Pancreas (tissue), 10 donors: ENCODE measurements at regions of chr22 and their contacts with region 1.

Region 1: DNA sequence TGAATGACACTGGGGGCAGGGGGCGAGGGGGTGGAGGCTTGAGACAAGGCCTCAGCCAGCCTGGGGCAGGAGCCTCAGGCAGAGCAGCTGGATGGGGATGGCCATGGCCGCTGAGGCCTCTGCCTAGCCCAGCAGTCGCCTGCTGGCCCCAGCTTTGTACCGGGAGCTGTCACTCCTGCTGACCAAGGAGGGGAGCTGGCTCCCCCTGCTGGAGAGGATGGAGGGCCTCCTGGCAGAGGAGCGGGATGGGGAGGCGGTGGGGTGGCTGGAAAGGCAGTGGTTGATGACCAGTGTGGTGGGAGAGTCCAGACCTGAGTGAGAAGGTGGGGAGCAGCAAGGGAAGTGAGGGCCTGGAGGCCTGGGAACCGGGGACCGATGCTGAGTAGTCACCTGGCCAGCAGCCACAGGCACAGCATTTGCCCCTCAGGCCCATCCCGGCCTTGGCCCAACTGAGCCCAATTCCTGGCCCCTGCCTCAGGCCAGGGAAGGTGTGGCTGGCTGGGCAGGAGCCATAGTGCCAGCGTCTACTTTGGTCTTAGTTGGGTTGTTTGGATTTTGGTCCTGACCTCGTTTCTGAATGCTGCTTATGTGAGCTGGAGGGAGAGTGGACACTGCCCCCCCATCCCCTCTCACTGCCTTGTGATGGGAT is 6.0 kb upstream of the SUSD2 start:
- DNase-seq: peak; percentile 58 to 90 (median 80)
- ATAC-seq: peak; percentile 70 to 89 (median 82)
- H3K4me3 ChIP-seq: no peak overlapping the region
- H3K27ac ChIP-seq: no peak overlapping the region
- H3K4me1 ChIP-seq: no peaks in the 10 kb centered on the region
- H3K27me3 ChIP-seq: no peaks in the 10 kb centered on the region
- CTCF ChIP-seq: peak; percentile 50 to 66 (median 62)

Region 2: GRCh38 chr22:24005201-24005600 is 170.1 kb before region 1 on chr22 and contains the start of gene GSTT4:
- intact Hi-C with region 1: loop called in 1 of 3 experiments (anchors 10 kb)
- DNase-seq: peak in 1 of 6 donors; percentile 70
- ATAC-seq: peak in 3 of 4 donors; percentile 17 to 52 (median 26)
- H3K4me3 ChIP-seq: no peak within 1 kb of the TSS
- H3K27ac ChIP-seq: no peak within 1 kb of the TSS
- H3K4me1 ChIP-seq: no peaks in the 10 kb centered on the region
- H3K27me3 ChIP-seq: no peaks in the 10 kb centered on the region
- CTCF ChIP-seq: no peak
- total RNA-seq, gene GSTT4: not detected

Region 3: DNA sequence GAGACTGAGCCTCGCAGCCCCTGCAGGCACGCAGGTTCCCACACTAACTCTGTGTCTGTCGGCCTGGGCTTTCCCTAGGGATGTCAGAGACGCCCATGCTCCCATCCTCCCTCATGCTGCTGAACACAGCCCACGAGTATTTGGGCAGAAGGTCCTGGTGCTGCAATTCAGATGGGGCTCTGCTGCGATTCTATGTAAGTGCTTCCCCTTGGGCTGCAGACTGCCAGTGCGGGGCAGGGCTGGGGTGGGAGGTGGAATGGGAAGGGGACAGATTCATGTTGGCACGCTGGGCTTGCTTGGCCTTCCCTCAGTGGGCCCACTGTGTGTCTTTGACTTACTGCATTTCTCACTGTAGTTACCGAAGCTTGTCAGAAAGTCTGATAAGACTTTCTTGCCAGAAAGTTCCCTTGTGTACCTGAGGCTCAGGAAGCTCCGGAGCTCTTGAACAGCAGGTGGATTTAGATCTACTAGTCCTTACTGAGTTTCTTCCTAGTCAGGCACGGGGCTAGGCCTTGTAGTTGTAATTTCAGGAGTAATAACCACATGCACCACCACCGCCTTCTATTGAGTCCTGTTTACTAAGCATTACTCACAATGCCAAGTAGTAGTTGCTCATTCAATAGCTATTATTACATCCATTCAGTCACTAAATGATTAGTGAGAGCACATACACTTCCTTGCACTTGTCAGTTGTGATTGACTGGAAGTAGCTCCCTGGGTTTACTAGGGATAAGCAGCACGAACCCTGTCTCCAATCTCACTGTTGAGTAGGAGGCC is 99.0 kb before region 1 on chr22:
- intact Hi-C with region 1: no loop called
- DNase-seq: no peak
- ATAC-seq: no peak
- H3K4me3 ChIP-seq: no peak overlapping the region
- H3K27ac ChIP-seq: no peak overlapping the region
- H3K4me1 ChIP-seq: no peaks in the 10 kb centered on the region
- H3K27me3 ChIP-seq: no peaks in the 10 kb centered on the region
- CTCF ChIP-seq: no peak

Region 4: GRCh38 chr22:24106385-24107381 is 68.6 kb before region 1 on chr22:
- intact Hi-C with region 1: loop called in 1 of 3 experiments (anchors 2 kb)
- DNase-seq: no peak
- ATAC-seq: peak in 2 of 4 donors; percentile 18 to 52
- H3K4me3 ChIP-seq: no peak overlapping the region
- H3K27ac ChIP-seq: no peak overlapping the region
- H3K4me1 ChIP-seq: no peaks in the 10 kb centered on the region
- H3K27me3 ChIP-seq: no peaks in the 10 kb centered on the region
- CTCF ChIP-seq: no peak

Region 5: GRCh38 chr22:24315367-24315966 is 140.2 kb after region 1 on chr22:
- intact Hi-C with region 1: no loop called
- DNase-seq: no peak
- ATAC-seq: no peak
- H3K4me3 ChIP-seq: no peak overlapping the region
- H3K27ac ChIP-seq: no peak overlapping the region
- H3K4me1 ChIP-seq: no peaks in the 10 kb centered on the region
- H3K27me3 ChIP-seq: no peaks in the 10 kb centered on the region
- CTCF ChIP-seq: no peak